Common myeloid progenitor, CD34-positive (primary cell): ENCODE measurements at regions of chr9 and their contacts with region 1.

Region 1: GRCh38 chr9:96232539-96233241 is 69.3 kb downstream of the HSD17B3 start:
- DNase-seq: peak; percentile 26 to 64 (median 63)
- H3K4me3 ChIP-seq: no peak overlapping the region
- H3K27ac ChIP-seq: no peak overlapping the region
- H3K4me1 ChIP-seq: no peaks in the 10 kb centered on the region
- H3K27me3 ChIP-seq: peaks cover 0 to 48% (median 24%) of the 10 kb centered on the region in 5 experiments

Region 2: GRCh38 chr9:96245399-96245798 is 12.7 kb after region 1 on chr9:
- CTCF ChIA-PET with region 1: interaction called, 19 read pairs
- POLR2A ChIA-PET with region 1: no interaction called
- DNase-seq: no peak
- H3K4me3 ChIP-seq: no peak overlapping the region
- H3K27ac ChIP-seq: no peak overlapping the region
- H3K4me1 ChIP-seq: peaks cover 0 to 9% (median 5%) of the 10 kb centered on the region in 4 experiments
- H3K27me3 ChIP-seq: peaks cover 2 to 80% (median 35%) of the 10 kb centered on the region in 5 experiments